Activated CD4-positive, alpha-beta memory T cell treated with anti-CD3 and anti-CD28 coated beads for 36 hours (primary cell): ENCODE measurements at regions of chr11 and their contacts with region 1.

Region 1: GRCh38 chr11:19076744-19077589 is 16.4 kb upstream of the MRGPRX2 start:
- DNase-seq: peak; percentile 78
- H3K4me3 Mint-ChIP-seq: no peak overlapping the region
- H3K27ac Mint-ChIP-seq: no peak overlapping the region
- H3K4me1 Mint-ChIP-seq: no peaks in the 10 kb centered on the region
- H3K27me3 Mint-ChIP-seq: peaks cover 5% of the 10 kb centered on the region

Region 2: GRCh38 chr11:19055016-19055415 is 22.0 kb before region 1 on chr11:
- CTCF ChIA-PET with region 1: interaction called, 32 read pairs
- POLR2A ChIA-PET with region 1: interaction called, 3 read pairs
- intact Hi-C with region 1: no loop called
- DNase-seq: no peak
- H3K4me3 Mint-ChIP-seq: no peak overlapping the region
- H3K27ac Mint-ChIP-seq: no peak overlapping the region
- H3K4me1 Mint-ChIP-seq: peaks cover 2% of the 10 kb centered on the region
- H3K27me3 Mint-ChIP-seq: peaks cover 2% of the 10 kb centered on the region

Region 3: GRCh38 chr11:19087658-19088057 is 10.7 kb after region 1 on chr11:
- CTCF ChIA-PET with region 1: interaction called, 55 read pairs
- POLR2A ChIA-PET with region 1: no interaction called
- intact Hi-C with region 1: no loop called
- DNase-seq: no peak
- H3K4me3 Mint-ChIP-seq: no peak overlapping the region
- H3K27ac Mint-ChIP-seq: no peak overlapping the region
- H3K4me1 Mint-ChIP-seq: no peaks in the 10 kb centered on the region
- H3K27me3 Mint-ChIP-seq: peaks cover 16% of the 10 kb centered on the region

Region 4: GRCh38 chr11:19116971-19117750 is 40.2 kb after region 1 on chr11 and contains the start of gene ZDHHC13:
- CTCF ChIA-PET with region 1: interaction called, 19 read pairs
- POLR2A ChIA-PET with region 1: interaction called, 4 read pairs
- intact Hi-C with region 1: loop called (anchors 2 kb)
- DNase-seq: peak; percentile 98
- H3K4me3 Mint-ChIP-seq: peak within 1 kb of the TSS; percentile 89
- H3K27ac Mint-ChIP-seq: peak within 1 kb of the TSS; percentile 67
- H3K4me1 Mint-ChIP-seq: peaks cover 45% of the 10 kb centered on the region
- H3K27me3 Mint-ChIP-seq: no peaks in the 10 kb centered on the region
- total RNA-seq, gene ZDHHC13: 25.4 to 26.8 TPM

Region 5: DNA sequence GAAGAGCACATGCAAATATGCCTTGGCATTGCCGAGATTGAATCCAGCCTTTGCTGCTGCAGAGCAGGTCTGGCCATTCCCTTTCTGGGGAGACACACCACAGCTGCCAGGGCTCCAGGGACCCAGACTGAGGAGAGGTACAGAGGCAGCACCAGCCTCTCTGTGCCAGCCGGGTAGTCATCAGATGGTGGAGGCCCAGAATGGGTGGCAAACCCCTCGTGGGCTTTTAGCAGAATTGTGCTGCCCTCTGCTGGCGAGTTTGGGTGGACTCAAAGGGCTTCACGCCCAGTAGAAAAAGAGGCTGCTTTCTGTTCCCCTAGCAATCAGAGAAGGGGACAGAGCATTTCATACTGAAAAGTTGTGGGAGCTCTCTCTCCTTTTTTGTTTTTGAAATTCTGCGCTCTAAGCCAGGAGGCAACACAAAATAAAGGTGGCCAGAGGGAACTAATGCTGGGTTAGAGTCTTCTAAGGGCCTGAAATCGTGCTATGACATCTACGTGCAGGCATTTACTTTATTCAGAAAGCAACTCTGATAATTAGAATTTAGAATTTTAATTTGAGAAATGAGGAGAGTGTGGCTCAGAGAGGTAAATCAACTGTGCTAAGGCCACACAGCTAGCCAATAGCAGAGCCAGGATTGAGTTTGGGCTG is 476.8 kb after region 1 on chr11:
- CTCF ChIA-PET with region 1: interaction called, 44 read pairs
- POLR2A ChIA-PET with region 1: no interaction called
- intact Hi-C with region 1: no loop called
- DNase-seq: peak; percentile 82
- H3K4me3 Mint-ChIP-seq: no peak overlapping the region
- H3K27ac Mint-ChIP-seq: no peak overlapping the region
- H3K4me1 Mint-ChIP-seq: no peaks in the 10 kb centered on the region
- H3K27me3 Mint-ChIP-seq: peaks cover 6% of the 10 kb centered on the region

Region 6: DNA sequence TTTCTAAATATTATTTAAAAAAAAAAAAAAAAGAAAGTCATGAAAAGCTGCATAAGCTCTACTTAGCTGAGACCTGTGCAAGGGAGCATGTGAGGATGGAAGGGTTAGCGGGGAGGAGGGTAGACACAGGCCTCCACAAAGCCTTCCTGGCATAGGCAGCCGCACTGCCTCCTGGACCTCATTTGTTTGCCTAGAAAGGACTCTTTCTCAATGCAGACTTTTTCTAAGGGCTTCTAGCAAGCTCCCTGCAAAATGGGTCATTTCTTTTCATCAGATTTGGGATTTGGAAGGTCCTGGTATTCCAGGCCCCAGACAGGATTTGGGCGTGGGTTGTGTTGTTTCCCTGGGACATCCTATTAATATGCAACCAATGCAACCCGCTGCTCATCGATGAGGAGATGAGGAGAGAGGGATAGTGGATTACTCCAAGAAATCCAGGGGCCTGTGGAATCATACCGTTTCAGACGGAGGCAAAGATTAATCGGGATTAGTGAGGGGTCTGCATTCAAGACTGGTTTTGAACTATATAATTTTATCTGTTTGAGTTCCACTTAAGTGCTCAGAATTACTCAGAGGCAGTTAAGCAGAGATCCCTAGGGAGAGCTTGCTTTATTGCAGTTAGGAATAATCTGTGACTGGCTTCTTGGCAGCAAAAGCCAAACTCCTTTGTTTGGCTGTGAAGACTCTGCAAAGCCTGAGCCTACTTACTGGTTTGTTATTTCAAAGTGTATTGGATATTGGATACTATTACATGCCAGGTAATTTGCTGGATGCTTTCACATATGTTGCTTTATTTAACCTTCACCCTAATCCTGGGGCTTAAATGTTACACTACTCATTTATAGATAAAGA is 528.8 kb after region 1 on chr11:
- CTCF ChIA-PET with region 1: no interaction called
- POLR2A ChIA-PET with region 1: no interaction called
- intact Hi-C with region 1: no loop called
- DNase-seq: no peak
- H3K4me3 Mint-ChIP-seq: no peak overlapping the region
- H3K27ac Mint-ChIP-seq: no peak overlapping the region
- H3K4me1 Mint-ChIP-seq: no peaks in the 10 kb centered on the region
- H3K27me3 Mint-ChIP-seq: peaks cover 22% of the 10 kb centered on the region